HepG2 (cell line): ENCODE measurements at regions of chr15 and their contacts with region 1.

Region 1: DNA sequence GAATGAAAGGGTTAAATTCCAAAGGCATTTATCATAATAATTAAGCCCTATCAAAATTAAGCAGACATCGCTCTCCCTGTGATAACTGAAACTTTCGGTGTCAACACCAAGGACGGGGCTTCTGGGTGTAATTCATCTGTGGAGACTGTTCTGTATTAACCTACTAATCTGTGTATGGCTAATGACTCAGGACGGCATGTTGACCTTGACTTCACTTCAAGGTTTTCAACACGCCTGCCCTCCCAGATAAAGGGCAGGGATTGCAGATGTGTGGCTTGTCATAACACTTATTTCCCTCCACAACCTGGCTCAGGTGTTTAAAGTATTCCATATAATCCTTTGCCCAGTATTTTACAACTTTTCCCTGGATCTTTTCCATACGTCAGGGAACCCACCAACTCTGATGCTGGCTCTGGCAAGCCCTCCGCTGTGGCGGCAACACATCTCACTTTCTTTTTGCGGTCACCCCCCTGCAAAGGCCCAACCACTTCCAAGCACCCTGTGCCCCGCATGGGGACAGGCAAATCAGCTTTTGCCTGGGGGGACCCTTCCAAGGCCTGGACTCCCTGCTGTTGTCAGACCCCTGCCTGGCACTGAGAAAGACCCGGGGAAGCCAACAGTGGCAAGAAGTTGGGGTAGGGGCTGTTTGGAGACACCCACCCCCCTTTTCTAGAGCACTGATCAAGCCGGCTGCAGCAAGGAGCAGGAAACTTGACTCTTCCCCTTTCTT is 93.2 kb upstream of the MEF2A start:
- DNase-seq: peak; percentile 44
- ATAC-seq: peak; percentile 25; the same call in 2 of the 3 replicates
- H3K4me3 ChIP-seq: no peak overlapping the region
- H3K27ac ChIP-seq: no peak overlapping the region
- H3K4me1 ChIP-seq: peaks cover 39% of the 10 kb centered on the region
- H3K27me3 ChIP-seq: no peaks in the 10 kb centered on the region; a peak in 2 of 5 replicates
- CTCF ChIP-seq: no peak
- EP300 ChIP-seq: no peak
- POLR2A ChIP-seq: no peak
- RAD21 ChIP-seq: no peak

Region 2: GRCh38 chr15:99454941-99455788 is 17.4 kb before region 1 on chr15:
- CTCF ChIA-PET with region 1: no interaction called
- POLR2A ChIA-PET with region 1: interaction called, 3 read pairs
- in situ Hi-C with region 1: no loop called
- intact Hi-C with region 1: loop called (anchors 1 kb)
- DNase-seq: peak; percentile 49
- ATAC-seq: peak; percentile 87
- H3K4me3 ChIP-seq: peak overlapping the region; percentile 48 to 75 (median 71)
- H3K27ac ChIP-seq: no peak overlapping the region
- H3K4me1 ChIP-seq: peaks cover 45% of the 10 kb centered on the region
- H3K27me3 ChIP-seq: peaks cover 3 to 40% of the 10 kb centered on the region in 2 experiments; a peak in 4 of 5 replicates
- CTCF ChIP-seq: no peak
- EP300 ChIP-seq: no peak
- POLR2A ChIP-seq: no peak
- RAD21 ChIP-seq: no peak

Region 3: GRCh38 chr15:99514306-99514705 is 41.7 kb after region 1 on chr15:
- CTCF ChIA-PET with region 1: no interaction called
- POLR2A ChIA-PET with region 1: no interaction called
- in situ Hi-C with region 1: no loop called
- intact Hi-C with region 1: no loop called
- DNase-seq: no peak
- ATAC-seq: no peak
- H3K4me3 ChIP-seq: no peak overlapping the region
- H3K27ac ChIP-seq: no peak overlapping the region
- H3K4me1 ChIP-seq: no peaks in the 10 kb centered on the region
- H3K27me3 ChIP-seq: no peaks in the 10 kb centered on the region; a peak in 1 of 5 replicates
- CTCF ChIP-seq: no peak
- EP300 ChIP-seq: no peak
- POLR2A ChIP-seq: no peak
- RAD21 ChIP-seq: no peak

Region 4: DNA sequence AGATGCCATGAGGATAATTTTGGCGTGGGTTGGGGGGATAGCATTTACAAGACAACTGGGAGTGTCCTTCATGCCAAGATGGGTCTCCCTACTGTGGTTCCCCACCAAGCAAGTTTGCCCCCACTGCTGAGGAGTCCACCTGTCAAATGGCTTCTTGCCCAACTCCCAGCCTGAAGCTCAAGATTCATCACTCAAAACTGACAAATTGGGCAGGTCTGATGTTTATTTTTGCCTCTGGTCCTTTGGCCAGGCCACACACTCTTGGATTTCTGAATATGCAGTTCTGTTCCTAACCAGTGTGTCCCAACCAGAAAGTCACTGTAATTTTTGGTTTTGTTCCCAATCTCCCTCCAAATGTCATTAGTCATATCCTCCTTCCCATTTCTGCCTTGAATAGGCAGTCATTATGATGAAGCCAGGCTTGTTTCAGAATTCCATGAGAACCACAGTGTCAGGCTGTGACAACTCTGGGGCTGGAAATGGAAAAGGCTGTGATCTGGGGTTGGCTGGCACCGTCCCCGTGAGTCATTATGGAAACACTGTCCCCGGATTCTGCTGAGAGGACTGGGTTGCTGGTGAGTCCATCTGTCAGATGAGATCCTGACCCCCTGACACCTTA is 64.0 kb after region 1 on chr15:
- CTCF ChIA-PET with region 1: no interaction called
- POLR2A ChIA-PET with region 1: no interaction called
- in situ Hi-C with region 1: no loop called
- intact Hi-C with region 1: no loop called
- DNase-seq: no peak
- ATAC-seq: no peak
- H3K4me3 ChIP-seq: no peak overlapping the region
- H3K27ac ChIP-seq: no peak overlapping the region
- H3K4me1 ChIP-seq: no peaks in the 10 kb centered on the region
- H3K27me3 ChIP-seq: peaks cover 0 to 1% of the 10 kb centered on the region in 2 experiments; a peak in 1 of 5 replicates
- CTCF ChIP-seq: no peak
- EP300 ChIP-seq: no peak
- POLR2A ChIP-seq: no peak
- RAD21 ChIP-seq: no peak